PC-9 (cell line): ENCODE measurements at regions of chr15 and their contacts with region 1.

Region 1: GRCh38 chr15:65558997-65559770 is 28.9 kb downstream of the HACD3 start:
- DNase-seq: no peak
- H3K4me3 ChIP-seq: no peak overlapping the region
- H3K27ac ChIP-seq: no peak overlapping the region
- H3K4me1 ChIP-seq: no peaks in the 10 kb centered on the region
- H3K27me3 ChIP-seq: no peaks in the 10 kb centered on the region
- CTCF ChIP-seq: no peak

Region 2: GRCh38 chr15:64740311-64741170 is 818.6 kb before region 1 on chr15:
- CTCF ChIA-PET with region 1: no interaction called
- POLR2A ChIA-PET with region 1: interaction called, 11 read pairs
- intact Hi-C with region 1: no loop called
- DNase-seq: peak in 1 of 2 experiments; percentile 8
- H3K4me3 ChIP-seq: no peak overlapping the region
- H3K27ac ChIP-seq: no peak overlapping the region
- H3K4me1 ChIP-seq: no peaks in the 10 kb centered on the region
- H3K27me3 ChIP-seq: no peaks in the 10 kb centered on the region
- CTCF ChIP-seq: no peak

Region 3: GRCh38 chr15:65231306-65231705 is 327.9 kb before region 1 on chr15:
- CTCF ChIA-PET with region 1: no interaction called
- POLR2A ChIA-PET with region 1: no interaction called
- intact Hi-C with region 1: no loop called
- DNase-seq: no peak
- H3K4me3 ChIP-seq: no peak overlapping the region
- H3K27ac ChIP-seq: no peak overlapping the region
- H3K4me1 ChIP-seq: no peaks in the 10 kb centered on the region
- H3K27me3 ChIP-seq: no peaks in the 10 kb centered on the region
- CTCF ChIP-seq: no peak

Region 4: GRCh38 chr15:65355173-65355987 is 203.8 kb before region 1 on chr15:
- CTCF ChIA-PET with region 1: no interaction called
- POLR2A ChIA-PET with region 1: no interaction called
- intact Hi-C with region 1: no loop called
- DNase-seq: no peak
- H3K4me3 ChIP-seq: no peak overlapping the region
- H3K27ac ChIP-seq: no peak overlapping the region
- H3K4me1 ChIP-seq: no peaks in the 10 kb centered on the region
- H3K27me3 ChIP-seq: no peaks in the 10 kb centered on the region
- CTCF ChIP-seq: no peak